ENCODE measurements at regions of chr7 and their contacts with region 1.

Region 1: DNA sequence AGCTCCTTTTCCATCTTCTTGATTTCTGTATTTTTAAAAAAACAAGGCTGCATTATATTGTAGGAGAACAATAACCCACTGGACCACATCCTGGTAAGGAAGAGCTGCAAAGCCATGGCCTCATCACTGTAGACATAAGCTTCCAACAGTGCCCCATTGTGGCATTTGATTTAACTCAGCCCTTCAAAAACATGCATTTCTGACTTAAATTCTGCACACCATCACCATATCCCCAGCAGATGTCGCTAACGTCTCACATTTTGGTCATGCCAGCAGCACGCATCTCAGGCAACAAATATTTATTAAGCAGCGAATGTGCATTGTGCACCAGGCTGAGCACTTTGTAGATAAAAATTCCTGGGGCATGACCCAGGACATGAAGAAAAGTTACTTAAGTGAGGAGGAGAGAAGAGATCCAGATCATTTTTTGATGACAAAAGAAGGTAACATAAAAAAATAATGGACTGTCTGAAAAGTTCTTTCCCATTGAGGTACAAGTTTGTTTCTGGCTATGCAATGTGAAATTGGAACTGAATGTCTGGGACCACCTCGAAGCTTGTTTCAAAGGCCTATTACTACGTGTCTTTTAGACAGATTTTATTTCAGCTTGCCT is 164.6 kb upstream of the CDCA7L start:
- DNase-seq: peak in 1 of 2 donors; percentile 79
- H3K4me3 ChIP-seq: no peak overlapping the region
- H3K27ac ChIP-seq: no peak overlapping the region
- H3K4me1 ChIP-seq: no peaks in the 10 kb centered on the region
- H3K27me3 ChIP-seq: peaks cover 4% of the 10 kb centered on the region
- CTCF ChIP-seq: peak; percentile 83 to 88 (median 86)

Region 2: DNA sequence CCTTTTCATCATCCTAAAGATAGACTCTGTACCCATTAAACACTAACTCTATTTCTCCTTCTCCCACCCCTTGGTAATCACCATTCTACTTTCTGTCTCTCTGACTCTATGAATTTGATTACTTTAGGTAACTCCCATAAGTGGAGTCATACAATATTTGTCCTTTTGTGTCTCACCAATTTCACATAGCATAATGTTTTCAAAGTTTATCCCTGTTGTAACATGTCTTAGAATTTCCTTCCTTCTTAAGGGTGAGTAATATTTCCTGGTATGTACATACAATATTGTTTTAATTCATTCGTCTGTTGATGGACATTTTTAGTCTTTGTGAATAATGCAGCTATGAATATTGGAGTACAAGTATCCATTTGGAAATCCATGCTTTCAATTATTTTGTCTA is 113.7 kb before region 1 on chr7:
- intact Hi-C with region 1: no loop called
- DNase-seq: no peak
- H3K4me3 ChIP-seq: no peak overlapping the region
- H3K27ac ChIP-seq: no peak overlapping the region
- H3K4me1 ChIP-seq: no peaks in the 10 kb centered on the region
- H3K27me3 ChIP-seq: no peaks in the 10 kb centered on the region
- CTCF ChIP-seq: no peak

Region 3: GRCh38 chr7:22292516-22292915 is 182.2 kb after region 1 on chr7:
- intact Hi-C with region 1: loop called (anchors 5 kb)
- DNase-seq: no peak
- H3K4me3 ChIP-seq: no peak overlapping the region
- H3K27ac ChIP-seq: no peak overlapping the region
- H3K4me1 ChIP-seq: no peaks in the 10 kb centered on the region
- H3K27me3 ChIP-seq: no peaks in the 10 kb centered on the region
- CTCF ChIP-seq: no peak